Activated CD4-positive, alpha-beta T cell treated with anti-CD3 and anti-CD28 coated beads, Interleukin-2, amount 10 ng/mL, durations not matched to agents 7 days and 5 days (primary cell): ENCODE measurements at regions of chr17 and their contacts with region 1.

Region 1: DNA sequence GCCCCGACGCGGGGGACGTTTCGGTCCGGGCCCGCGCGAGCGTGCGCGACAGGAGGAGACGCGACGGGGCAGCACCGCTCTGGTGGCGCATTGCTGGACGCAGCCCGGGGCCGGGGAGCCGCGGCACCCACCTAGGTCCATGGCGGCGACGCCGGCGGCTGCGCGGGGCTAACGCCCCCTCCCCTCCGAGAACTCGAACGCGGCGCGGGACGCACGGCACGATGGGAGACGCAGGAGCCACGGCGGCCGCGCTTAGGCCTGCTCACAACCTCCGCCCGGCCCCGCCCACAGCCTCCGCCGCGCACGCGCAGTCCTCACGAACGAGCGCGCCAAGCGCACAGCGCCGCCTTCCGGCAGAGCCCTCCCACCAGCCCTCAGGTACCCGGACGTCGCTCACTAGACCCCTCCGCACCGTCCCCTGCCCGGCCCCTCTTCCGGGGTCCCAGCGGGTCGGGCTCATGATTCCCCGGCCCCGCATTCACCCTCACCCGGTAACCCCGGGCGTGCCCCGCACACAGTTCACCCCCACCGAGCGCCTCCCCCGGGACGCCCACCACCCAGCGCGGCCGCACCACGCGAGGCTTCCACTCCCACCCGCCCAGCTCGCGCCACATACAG is at the start of gene GEMIN4:
- DNase-seq: peak; percentile 95
- H3K4me3 Mint-ChIP-seq: peak within 1 kb of the TSS; percentile 88
- H3K27ac Mint-ChIP-seq: peak within 1 kb of the TSS; percentile 98
- H3K4me1 Mint-ChIP-seq: peaks cover 35% of the 10 kb centered on the region
- H3K27me3 Mint-ChIP-seq: no peaks in the 10 kb centered on the region
- total RNA-seq, gene GEMIN4: 29.1 to 35.7 TPM

Region 2: GRCh38 chr17:740240-741017 is 11.7 kb before region 1 on chr17:
- CTCF ChIA-PET with region 1: interaction called, 11 read pairs
- POLR2A ChIA-PET with region 1: no interaction called
- DNase-seq: peak; percentile 19
- H3K4me3 Mint-ChIP-seq: peak overlapping the region; percentile 5
- H3K27ac Mint-ChIP-seq: peak overlapping the region; percentile 61
- H3K4me1 Mint-ChIP-seq: peaks cover 20% of the 10 kb centered on the region
- H3K27me3 Mint-ChIP-seq: no peaks in the 10 kb centered on the region